ENCODE measurements at regions of chr19 and their contacts with region 1.

Region 1: GRCh38 chr19:18117692-18118378 is 20.3 kb downstream of the MAST3 start:
- DNase-seq: peak; percentile 75
- H3K4me3 ChIP-seq: peak overlapping the region; percentile 70
- H3K27ac ChIP-seq: peak overlapping the region; percentile 75 to 80
- H3K4me1 ChIP-seq: peaks cover 6% of the 10 kb centered on the region
- H3K27me3 ChIP-seq: no peaks in the 10 kb centered on the region
- CTCF ChIP-seq: peak in 2 of 4 experiments; percentile 12
- POLR2A ChIP-seq: no peak

Region 2: DNA sequence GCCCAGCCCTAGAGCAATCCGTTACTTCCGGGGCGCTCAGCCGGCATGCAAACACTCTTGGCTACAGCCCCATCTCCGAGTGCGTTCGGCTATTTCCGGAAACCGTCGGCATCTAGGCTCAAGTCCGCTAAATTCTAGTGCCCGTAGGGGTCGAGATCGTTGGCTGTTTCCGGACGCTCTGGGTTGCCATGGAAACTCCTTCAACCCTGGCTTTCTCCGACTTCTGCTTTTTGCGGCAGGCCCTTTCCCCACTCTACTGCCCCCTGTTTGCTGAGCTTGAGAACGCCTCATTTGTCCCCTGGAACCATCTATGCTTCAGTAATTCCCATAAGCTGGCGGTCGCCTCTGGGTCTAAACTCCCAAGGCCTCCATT is 34.6 kb after region 1 on chr19:
- intact Hi-C with region 1: loop called (anchors 5 kb)
- DNase-seq: peak; percentile 94
- H3K4me3 ChIP-seq: peak overlapping the region; percentile 75 to 92
- H3K27ac ChIP-seq: peak overlapping the region; percentile 87 to 90
- H3K4me1 ChIP-seq: peaks cover 21% of the 10 kb centered on the region
- H3K27me3 ChIP-seq: no peaks in the 10 kb centered on the region
- CTCF ChIP-seq: peak; percentile 28 to 64 (median 50)
- POLR2A ChIP-seq: no peak

Region 3: GRCh38 chr19:18165794-18166544 is 48.1 kb after region 1 on chr19:
- intact Hi-C with region 1: no loop called
- DNase-seq: no peak
- H3K4me3 ChIP-seq: no peak overlapping the region
- H3K27ac ChIP-seq: no peak overlapping the region
- H3K4me1 ChIP-seq: no peaks in the 10 kb centered on the region
- H3K27me3 ChIP-seq: no peaks in the 10 kb centered on the region
- CTCF ChIP-seq: no peak
- POLR2A ChIP-seq: no peak

Region 4: DNA sequence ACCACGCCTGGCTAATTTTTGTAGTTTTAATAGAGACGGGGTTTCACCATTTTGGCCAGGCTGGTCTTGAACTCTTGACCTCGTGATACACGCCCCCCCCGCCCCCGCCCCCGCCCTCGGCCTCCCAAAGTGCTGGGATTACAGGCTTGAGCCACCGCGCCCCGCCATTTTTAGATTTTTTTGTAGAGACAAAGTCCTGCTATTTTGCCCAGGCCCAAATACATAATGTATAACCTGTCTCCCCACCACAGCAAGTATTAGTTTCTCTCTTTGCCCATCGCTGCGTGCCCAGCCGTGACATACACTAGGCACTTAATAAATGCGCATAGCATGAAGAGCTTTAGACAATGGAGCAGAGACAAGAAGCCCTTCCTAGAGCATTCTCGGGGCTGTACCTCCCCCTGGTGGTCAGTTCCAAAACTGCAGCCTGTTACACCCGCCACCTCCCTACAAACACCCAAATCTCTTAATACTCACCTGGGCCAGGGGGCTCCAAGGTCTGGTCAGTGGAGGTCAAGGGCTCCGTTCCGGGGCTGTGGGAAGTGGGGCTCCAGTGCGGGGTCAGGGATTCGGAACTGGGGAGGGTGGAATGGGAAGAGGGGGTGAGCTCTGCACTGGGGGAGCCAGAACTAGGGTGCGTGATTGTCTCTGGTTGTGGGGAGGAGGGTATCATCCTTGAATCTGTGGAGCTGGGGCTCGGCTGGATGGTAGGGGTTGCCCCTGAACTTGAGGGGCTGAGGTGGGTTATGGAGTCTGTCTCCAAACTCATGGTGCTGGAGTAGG is 133.9 kb after region 1 on chr19:
- intact Hi-C with region 1: loop called (anchors 5 kb)
- DNase-seq: peak; percentile 57
- H3K4me3 ChIP-seq: no peak overlapping the region
- H3K27ac ChIP-seq: no peak overlapping the region
- H3K4me1 ChIP-seq: no peaks in the 10 kb centered on the region
- H3K27me3 ChIP-seq: no peaks in the 10 kb centered on the region
- CTCF ChIP-seq: peak; percentile 90 to 96 (median 95)
- POLR2A ChIP-seq: no peak